ENCODE measurements at regions of chr14 and their contacts with region 1.

Region 1: DNA sequence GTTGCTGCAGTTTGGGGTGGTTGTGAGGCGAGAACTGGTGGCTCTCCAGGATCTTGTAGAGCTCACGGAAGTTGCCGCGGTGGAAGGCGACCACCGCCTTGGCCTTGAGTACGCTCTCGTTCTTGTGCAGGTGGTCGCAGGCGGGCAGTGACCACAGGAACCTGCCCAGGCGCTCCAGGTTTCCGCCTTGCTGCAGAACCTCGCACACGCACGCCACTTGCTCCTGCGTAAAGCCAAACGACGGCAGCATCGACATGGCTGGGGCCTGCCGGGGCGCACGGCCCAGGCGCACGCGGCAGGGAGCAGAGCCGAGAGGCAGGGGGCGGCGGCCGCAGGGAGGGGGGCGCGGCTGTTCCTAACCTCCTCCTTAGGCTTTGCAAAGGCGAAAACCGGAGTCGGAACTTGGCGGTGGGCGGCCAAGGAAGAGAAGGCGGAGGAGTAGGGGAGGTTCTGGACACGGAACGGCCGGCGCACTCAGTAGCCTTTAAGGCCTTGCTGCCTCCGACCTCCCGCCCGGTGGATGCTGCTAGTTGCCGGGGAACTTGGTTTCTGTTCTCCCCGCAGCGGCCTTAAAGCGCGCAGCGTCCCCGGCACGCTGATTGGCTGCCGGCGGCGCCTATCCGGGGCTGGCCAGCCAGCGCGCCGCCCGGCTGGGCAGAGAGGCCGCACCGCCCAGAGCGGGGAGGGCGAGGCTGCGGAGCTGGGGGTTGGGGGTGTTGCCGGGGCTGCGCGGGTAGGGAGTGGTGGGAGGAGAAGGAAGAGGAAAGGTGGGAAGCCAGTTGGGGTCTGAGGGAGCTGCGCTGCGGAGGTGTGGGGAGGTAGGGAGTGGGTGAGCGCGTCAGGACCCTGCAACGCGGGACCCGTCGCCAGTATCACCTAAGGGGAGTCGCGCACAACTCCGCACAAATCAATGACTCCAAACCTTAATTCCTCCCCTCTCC is at the start of gene SIX1:
- DNase-seq: peak; percentile 80

Region 2: DNA sequence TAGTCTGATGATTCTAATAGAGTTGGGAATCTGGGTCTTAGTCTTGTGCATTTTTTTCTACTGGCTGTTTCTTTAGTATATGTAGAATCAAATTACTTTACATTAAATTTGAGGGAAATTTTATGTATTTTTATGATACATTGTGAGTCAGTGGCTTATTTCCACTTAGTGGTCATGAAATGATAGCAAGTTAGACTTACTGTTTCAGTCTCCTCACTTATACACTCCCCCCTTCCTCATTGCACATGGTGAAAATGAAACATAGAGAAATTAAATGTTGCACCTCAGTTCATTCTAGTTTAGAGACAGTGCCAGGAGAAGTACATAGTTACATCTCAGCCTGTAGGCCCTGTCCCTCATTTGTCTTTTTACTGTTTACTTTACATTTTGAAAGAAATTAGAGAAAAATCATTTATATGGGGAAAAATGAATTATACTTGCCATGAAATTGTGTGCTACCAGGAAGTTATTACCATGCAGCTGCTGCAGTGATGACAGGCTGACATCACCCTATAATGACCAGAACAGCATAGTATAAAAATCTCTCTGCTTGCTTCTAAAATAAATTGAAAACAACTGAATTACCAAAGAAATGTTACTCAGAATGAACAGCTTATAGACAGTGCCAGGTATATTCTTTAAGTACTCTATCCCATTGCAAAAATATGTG is 218.4 kb after region 1 on chr14:
- in situ Hi-C with region 1: no loop called
- DNase-seq: no peak

Region 3: GRCh38 chr14:60980811-60981632 is 331.8 kb after region 1 on chr14 and contains the starts of genes SLC38A6 and TRMT5:
- in situ Hi-C with region 1: loop called (anchors 25 kb)
- DNase-seq: peak; percentile 94

Region 4: GRCh38 chr14:61247935-61248334 is 598.7 kb after region 1 on chr14:
- in situ Hi-C with region 1: loop called (anchors 25 kb)
- DNase-seq: no peak